ENCODE measurements at regions of chr12 and their contacts with region 1.

Region 1: DNA sequence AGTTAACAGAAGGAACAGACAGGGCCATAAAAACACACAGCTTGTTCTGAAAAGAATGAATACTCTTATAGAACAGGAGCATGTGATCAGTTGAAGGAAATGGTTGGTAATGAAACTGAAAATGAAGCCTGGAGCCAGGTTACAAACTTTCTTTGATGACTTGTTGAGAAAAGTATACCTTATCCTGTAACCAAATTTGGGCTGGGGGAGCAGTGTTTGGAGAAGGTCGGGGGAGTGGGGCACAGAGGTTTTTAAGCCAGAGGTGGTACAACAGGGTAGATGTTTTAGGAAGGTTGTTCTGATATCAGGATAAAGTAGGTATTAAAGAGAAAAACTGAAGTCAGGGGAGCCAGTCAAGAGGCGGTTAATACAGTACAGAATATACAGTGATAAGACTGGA is 8.2 kb downstream of the GOLT1B start:
- DNase-seq: no peak
- ATAC-seq: no peak
- H3K4me3 ChIP-seq: no peak overlapping the region
- H3K27ac ChIP-seq: no peak overlapping the region
- H3K4me1 ChIP-seq: no peaks in the 10 kb centered on the region
- H3K27me3 ChIP-seq: no peaks in the 10 kb centered on the region
- CTCF ChIP-seq: no peak
- POLR2A ChIP-seq: no peak
- RAD21 ChIP-seq: no peak

Region 2: GRCh38 chr12:22190969-22191368 is 681.2 kb after region 1 on chr12:
- CTCF ChIA-PET with region 1: no interaction called
- POLR2A ChIA-PET with region 1: interaction called, 18 read pairs
- dilution Hi-C with region 1: no loop called
- in situ Hi-C with region 1: no loop called
- intact Hi-C with region 1: no loop called
- DNase-seq: no peak
- ATAC-seq: no peak
- H3K4me3 ChIP-seq: no peak overlapping the region
- H3K27ac ChIP-seq: no peak overlapping the region
- H3K4me1 ChIP-seq: no peaks in the 10 kb centered on the region
- H3K27me3 ChIP-seq: peaks cover 2% of the 10 kb centered on the region; the same call in 1 of the 2 replicates
- CTCF ChIP-seq: no peak
- POLR2A ChIP-seq: no peak
- RAD21 ChIP-seq: no peak